ENCODE measurements at regions of chr5 and their contacts with region 1.

Region 1: GRCh38 chr5:121706686-121707085 is 145.0 kb upstream of the FTMT start:
- DNase-seq: no peak
- H3K4me3 ChIP-seq: no peak overlapping the region
- H3K27ac ChIP-seq: no peak overlapping the region
- H3K4me1 ChIP-seq: no peaks in the 10 kb centered on the region
- H3K27me3 ChIP-seq: no peaks in the 10 kb centered on the region
- CTCF ChIP-seq: no peak
- POLR2A ChIP-seq: no peak

Region 2: DNA sequence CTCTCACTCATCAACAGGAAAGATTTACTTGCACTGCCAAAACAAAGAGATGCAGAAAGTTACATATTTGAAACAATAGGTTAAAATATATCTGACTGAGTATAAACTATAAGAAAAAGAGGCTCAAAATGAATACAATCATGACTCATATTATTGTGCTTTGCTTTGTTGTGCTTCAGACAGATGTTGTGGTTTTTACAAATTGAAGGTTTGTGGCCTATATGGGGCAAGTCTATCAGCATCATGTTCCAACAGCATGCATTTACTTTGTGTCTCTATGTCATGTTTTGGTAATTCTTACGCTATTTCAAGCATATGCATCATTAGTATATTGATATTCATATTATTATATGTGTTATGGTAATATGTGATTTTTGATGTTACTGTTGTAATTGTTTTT is 912.6 kb before region 1 on chr5:
- intact Hi-C with region 1: no loop called
- DNase-seq: no peak
- H3K4me3 ChIP-seq: no peak overlapping the region
- H3K27ac ChIP-seq: no peak overlapping the region
- H3K4me1 ChIP-seq: no peaks in the 10 kb centered on the region
- H3K27me3 ChIP-seq: no peaks in the 10 kb centered on the region
- CTCF ChIP-seq: no peak
- POLR2A ChIP-seq: no peak

Region 3: DNA sequence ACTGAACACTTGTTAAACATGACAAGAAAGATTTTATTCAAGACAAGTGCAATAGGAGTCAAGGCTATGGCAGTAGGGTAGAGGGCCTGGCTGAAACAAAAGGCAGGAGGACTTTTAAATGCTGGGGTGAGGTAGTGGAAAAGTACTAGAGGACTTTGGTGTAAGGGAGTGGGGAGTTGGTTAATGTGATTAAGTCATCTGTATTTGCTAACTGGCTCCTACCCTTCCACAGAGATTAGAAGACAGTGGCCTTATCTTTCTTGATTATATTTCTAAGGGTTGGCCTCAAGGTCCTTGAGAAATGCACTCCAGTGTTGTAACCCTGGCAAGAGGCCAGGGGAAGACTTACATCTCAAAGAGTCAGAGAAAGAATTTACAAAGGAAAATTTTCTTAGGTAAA is 15.2 kb before region 1 on chr5:
- intact Hi-C with region 1: loop called (anchors 2 kb)
- DNase-seq: no peak
- H3K4me3 ChIP-seq: no peak overlapping the region
- H3K27ac ChIP-seq: no peak overlapping the region
- H3K4me1 ChIP-seq: no peaks in the 10 kb centered on the region
- H3K27me3 ChIP-seq: no peaks in the 10 kb centered on the region
- CTCF ChIP-seq: no peak
- POLR2A ChIP-seq: no peak